Transverse colon (tissue), 4 donors: ENCODE measurements at regions of chr6 and their contacts with region 1.

Region 1: GRCh38 chr6:105424175-105424783 is 21.4 kb upstream of the PREP start:
- DNase-seq: peak; percentile 55
- H3K4me3 ChIP-seq: no peak overlapping the region
- H3K27ac ChIP-seq: no peak overlapping the region
- H3K4me1 ChIP-seq: no peaks in the 10 kb centered on the region
- H3K27me3 ChIP-seq: no peaks in the 10 kb centered on the region
- CTCF ChIP-seq: peak; percentile 58 to 71 (median 65)
- EP300 ChIP-seq: no peak
- POLR2A ChIP-seq: no peak

Region 2: GRCh38 chr6:104987218-104987617 is 437.1 kb before region 1 on chr6:
- in situ Hi-C with region 1: no loop called
- intact Hi-C with region 1: loop called (anchors 10 kb)
- DNase-seq: no peak
- H3K4me3 ChIP-seq: no peak overlapping the region
- H3K27ac ChIP-seq: no peak overlapping the region
- H3K4me1 ChIP-seq: no peaks in the 10 kb centered on the region
- H3K27me3 ChIP-seq: no peaks in the 10 kb centered on the region
- CTCF ChIP-seq: no peak
- EP300 ChIP-seq: no peak
- POLR2A ChIP-seq: no peak

Region 3: DNA sequence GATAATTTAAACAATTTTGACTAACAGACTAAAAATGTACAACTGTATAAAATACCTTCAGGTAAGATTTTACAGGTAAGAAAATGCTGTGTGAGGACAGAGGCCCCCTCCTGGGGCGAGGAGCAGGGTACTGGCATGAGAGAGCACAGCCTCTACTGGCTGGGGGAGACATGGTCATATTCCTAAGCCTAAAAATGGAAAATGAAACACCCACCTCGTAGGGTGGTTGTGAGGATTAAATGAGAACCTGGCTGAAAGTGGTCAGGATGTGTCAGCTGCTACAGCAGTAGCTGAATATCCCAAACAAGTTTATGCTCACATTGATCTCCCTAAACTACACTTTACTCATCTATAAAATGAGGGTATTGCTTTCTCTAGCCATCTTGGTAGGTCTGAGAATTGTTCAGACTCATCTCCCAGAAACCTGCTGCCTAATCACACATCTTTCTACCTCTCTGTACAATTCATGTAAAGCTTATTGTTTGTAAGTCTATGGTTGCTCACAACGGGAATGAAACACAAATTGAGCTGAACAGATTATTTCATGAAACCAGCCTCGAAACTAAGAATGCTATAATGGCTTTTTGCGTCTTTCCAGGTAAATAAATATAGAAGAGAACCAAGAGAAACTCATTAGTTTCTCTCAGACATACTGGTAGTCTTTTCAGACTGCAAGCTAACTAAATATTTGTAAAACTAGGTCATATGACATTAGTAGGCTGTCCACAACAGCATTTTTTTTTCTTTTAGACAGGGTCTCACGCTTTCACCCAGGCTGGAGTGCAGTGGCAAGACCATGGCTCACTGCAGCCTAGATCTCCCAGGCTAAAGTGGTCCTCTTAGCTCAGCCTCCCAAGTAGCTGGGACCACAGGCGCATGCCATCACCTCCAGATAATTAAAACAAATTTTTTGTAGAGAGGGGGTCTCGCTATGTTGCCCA is 314.1 kb before region 1 on chr6:
- in situ Hi-C with region 1: no loop called
- intact Hi-C with region 1: no loop called
- DNase-seq: no peak
- H3K4me3 ChIP-seq: no peak overlapping the region
- H3K27ac ChIP-seq: no peak overlapping the region
- H3K4me1 ChIP-seq: peaks cover 0 to 16% (median 8%) of the 10 kb centered on the region in 4 donors
- H3K27me3 ChIP-seq: no peaks in the 10 kb centered on the region
- CTCF ChIP-seq: no peak
- EP300 ChIP-seq: no peak
- POLR2A ChIP-seq: no peak